HAP-1 (cell line): ENCODE measurements at regions of chr17 and their contacts with region 1.

Region 1: GRCh38 chr17:66906321-66907278 is 57.9 kb upstream of the CACNG4 start:
- DNase-seq: peak; percentile 63 to 91
- H3K4me3 ChIP-seq: no peak overlapping the region
- H3K4me1 ChIP-seq: peaks cover 17% of the 10 kb centered on the region
- H3K27me3 ChIP-seq: no peaks in the 10 kb centered on the region

Region 2: DNA sequence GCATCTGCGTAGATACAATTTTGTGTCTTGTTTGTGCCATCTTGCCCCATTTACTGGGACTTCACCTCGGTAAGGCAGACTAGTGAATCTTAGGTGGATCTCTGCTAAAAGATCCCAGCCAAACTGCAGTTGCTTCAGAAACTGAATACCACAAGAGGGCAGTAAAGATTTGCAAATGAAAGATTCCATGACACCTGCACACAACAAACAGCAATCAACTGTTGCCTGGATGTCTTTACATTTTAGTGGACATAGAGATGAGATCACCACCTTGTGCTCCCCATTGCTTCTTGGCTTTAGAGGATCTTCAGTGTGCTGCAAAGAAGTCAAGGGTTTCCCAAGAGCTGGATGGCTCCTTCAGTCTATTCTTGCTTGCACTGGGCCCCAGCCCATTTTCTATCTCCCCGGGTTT is 190.8 kb before region 1 on chr17:
- in situ Hi-C with region 1: loop called (anchors 5 kb)
- DNase-seq: peak; percentile 33 to 74
- H3K4me3 ChIP-seq: no peak overlapping the region
- H3K4me1 ChIP-seq: peaks cover 7% of the 10 kb centered on the region
- H3K27me3 ChIP-seq: no peaks in the 10 kb centered on the region

Region 3: DNA sequence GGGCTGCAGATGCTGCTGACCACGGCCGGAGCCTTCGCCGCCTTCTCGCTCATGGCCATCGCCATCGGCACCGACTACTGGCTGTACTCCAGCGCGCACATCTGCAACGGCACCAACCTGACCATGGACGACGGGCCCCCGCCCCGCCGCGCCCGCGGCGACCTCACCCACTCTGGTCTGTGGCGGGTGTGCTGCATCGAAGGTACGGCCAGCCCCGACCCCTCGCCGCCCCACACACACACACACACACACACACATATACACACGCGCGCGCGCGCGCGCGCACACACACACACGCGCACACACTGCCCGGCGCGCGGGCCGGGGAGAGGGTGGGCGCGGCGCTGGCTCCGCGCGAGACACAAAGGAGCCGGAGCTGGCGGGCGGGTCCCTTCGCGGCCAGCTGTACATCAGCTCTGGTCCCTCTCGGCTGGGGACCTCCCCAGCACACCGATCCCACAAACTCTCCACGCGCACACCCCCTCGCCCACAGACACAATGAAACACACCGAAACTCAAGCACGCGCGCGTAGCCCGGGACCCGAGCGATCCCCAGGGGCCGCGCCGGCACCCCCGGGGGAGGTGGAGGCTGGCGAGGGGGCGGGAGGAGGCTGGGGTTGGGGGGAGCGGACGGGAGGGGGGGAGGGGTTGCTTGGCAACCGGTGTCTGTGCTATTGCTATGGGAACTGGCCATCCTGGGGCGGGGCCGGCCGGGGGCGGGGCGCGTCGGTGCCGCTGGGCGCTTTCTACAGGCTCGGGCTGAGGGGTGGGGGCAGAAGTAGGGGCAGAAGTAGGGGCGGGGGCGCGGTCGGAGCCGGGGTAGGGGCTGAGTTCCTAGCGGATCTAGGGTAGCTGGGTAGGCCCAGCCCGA is 58.6 kb after region 1 on chr17:
- in situ Hi-C with region 1: no loop called
- DNase-seq: peak in 1 of 2 experiments; percentile 63
- H3K4me3 ChIP-seq: peak overlapping the region; percentile 26
- H3K4me1 ChIP-seq: no peaks in the 10 kb centered on the region
- H3K27me3 ChIP-seq: peaks cover 69% of the 10 kb centered on the region